Caco-2 (cell line): ENCODE measurements at regions of chr2 and their contacts with region 1.

Region 1: GRCh38 chr2:179106676-179107428 is 56.9 kb upstream of the CCDC141 start:
- DNase-seq: peak in 1 of 2 experiments; percentile 15
- H3K4me3 ChIP-seq: no peak overlapping the region
- H3K4me3 Mint-ChIP-seq: no peak overlapping the region
- H3K27ac Mint-ChIP-seq: peak overlapping the region; percentile 48
- H3K4me1 ChIP-seq: peaks cover 23% of the 10 kb centered on the region
- H3K4me1 Mint-ChIP-seq: peaks cover 22% of the 10 kb centered on the region
- H3K27me3 ChIP-seq: no peaks in the 10 kb centered on the region
- H3K27me3 Mint-ChIP-seq: no peaks in the 10 kb centered on the region
- CTCF ChIP-seq: no peak

Region 2: GRCh38 chr2:178882666-178883440 is 224.0 kb before region 1 on chr2:
- CTCF ChIA-PET with region 1: no interaction called
- POLR2A ChIA-PET with region 1: no interaction called
- intact Hi-C with region 1: no loop called
- DNase-seq: no peak
- H3K4me3 ChIP-seq: no peak overlapping the region
- H3K4me3 Mint-ChIP-seq: no peak overlapping the region
- H3K27ac Mint-ChIP-seq: no peak overlapping the region
- H3K4me1 ChIP-seq: no peaks in the 10 kb centered on the region; the same call in 1 of the 2 replicates
- H3K4me1 Mint-ChIP-seq: no peaks in the 10 kb centered on the region
- H3K27me3 ChIP-seq: no peaks in the 10 kb centered on the region
- H3K27me3 Mint-ChIP-seq: no peaks in the 10 kb centered on the region
- CTCF ChIP-seq: no peak

Region 3: DNA sequence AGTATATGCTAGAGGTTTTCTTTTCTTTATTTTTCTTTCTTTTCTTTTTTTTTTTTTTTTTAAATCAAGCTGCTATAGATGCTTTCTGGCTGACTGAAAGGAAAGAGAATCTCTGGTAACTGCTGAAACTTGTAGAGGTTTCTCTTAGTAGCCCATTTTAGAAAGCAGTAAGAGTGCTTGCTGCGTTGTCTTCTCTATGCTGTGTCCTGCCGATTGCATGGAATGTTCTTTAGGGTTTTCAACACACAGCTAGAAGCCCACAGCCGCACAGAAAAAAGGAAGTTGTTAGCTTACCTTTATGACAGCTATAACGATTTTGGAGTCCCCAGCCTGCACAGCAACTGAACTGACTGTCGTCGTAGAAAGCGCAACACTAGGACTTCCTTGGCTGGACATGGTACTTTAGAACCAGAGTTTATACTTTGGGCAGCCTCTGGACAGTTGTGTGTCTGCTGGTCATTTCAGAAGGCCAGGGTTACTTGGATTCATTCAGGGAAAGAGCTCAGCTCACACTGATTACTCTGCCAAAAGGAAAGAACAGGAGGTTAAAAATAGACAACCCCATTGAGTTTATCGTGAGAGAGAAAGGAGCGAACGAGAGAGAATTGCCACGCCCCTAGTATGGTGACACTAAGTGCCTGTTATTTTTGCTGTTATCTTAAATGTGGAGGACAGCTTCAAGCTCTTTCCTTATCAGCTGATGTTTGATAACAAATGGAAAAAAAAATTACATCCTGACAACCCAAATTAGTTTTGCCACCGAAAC is 57.1 kb before region 1 on chr2 and contains the start of gene CCDC141:
- CTCF ChIA-PET with region 1: no interaction called
- POLR2A ChIA-PET with region 1: no interaction called
- intact Hi-C with region 1: loop called (anchors 2 kb)
- DNase-seq: peak; percentile 73 to 78
- H3K4me3 ChIP-seq: peak within 1 kb of the TSS; percentile 40
- H3K4me3 Mint-ChIP-seq: peak within 1 kb of the TSS; percentile 88
- H3K27ac Mint-ChIP-seq: peak within 1 kb of the TSS; percentile 87
- H3K4me1 ChIP-seq: peaks cover 26% of the 10 kb centered on the region
- H3K4me1 Mint-ChIP-seq: peaks cover 6% of the 10 kb centered on the region
- H3K27me3 ChIP-seq: no peaks in the 10 kb centered on the region
- H3K27me3 Mint-ChIP-seq: no peaks in the 10 kb centered on the region
- CTCF ChIP-seq: no peak
- total RNA-seq, gene CCDC141: 11.5 and 16.6 TPM in 2 replicates